Natural killer cell (primary cell): ENCODE measurements at regions of chrX and their contacts with region 1.

Region 1: DNA sequence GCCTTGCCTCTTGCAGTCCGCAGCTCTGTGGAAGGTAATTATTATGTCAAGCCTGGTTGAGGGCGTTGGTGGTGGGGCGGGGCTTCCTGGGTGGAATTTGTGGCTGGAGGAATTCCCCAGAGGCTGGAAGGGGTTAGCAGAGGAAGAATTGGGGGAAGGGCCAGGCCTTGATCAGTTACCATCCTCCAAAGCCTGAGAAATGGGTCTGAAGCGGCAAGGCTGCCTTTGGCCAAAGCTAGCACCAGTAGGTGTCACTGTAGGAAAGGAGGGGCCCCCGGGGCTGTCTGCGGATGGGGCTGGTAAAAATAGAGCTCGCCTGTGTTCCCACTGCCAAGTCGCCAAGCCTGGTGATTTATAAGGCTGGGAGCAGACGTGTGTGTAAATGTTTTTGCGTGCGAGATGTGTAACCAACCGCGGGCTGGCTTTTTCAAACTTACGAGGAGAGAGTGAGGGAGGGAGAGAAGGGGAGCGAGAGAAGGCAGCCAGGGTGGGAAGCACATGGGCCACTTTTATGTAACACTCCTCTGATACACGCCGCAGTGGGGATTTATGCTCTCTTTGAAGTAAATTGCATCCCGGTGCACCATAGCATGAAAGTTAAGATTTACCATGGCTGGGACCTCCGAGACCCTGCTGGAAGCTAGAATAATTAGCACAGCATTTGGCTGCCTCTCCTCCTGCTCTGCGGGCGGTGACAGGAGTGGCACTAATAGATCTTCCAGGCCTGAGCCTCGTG is 366.9 kb downstream of the BCOR start:
- DNase-seq: peak; percentile 26 to 70
- ATAC-seq: peak; percentile 52 to 81 (median 65)
- H3K4me3 ChIP-seq: no peak overlapping the region
- H3K4me3 Mint-ChIP-seq: no peak overlapping the region
- H3K27ac ChIP-seq: no peak overlapping the region
- H3K27ac Mint-ChIP-seq: no peak overlapping the region
- H3K4me1 ChIP-seq: peaks cover 12% of the 10 kb centered on the region
- H3K4me1 Mint-ChIP-seq: peaks cover 0 to 8% of the 10 kb centered on the region in 2 donors
- H3K27me3 ChIP-seq: no peaks in the 10 kb centered on the region
- H3K27me3 Mint-ChIP-seq: peaks cover 5 to 23% of the 10 kb centered on the region in 2 donors
- CTCF ChIP-seq: no peak

Region 2: GRCh38 chrX:39836802-39837420 is 106.1 kb after region 1 on chrX:
- intact Hi-C with region 1: no loop called
- DNase-seq: no peak
- ATAC-seq: peak in 1 of 3 donors; percentile 38
- H3K4me3 ChIP-seq: no peak overlapping the region
- H3K4me3 Mint-ChIP-seq: no peak overlapping the region
- H3K27ac ChIP-seq: no peak overlapping the region
- H3K27ac Mint-ChIP-seq: no peak overlapping the region
- H3K4me1 ChIP-seq: no peaks in the 10 kb centered on the region
- H3K4me1 Mint-ChIP-seq: no peaks in the 10 kb centered on the region
- H3K27me3 ChIP-seq: no peaks in the 10 kb centered on the region
- H3K27me3 Mint-ChIP-seq: no peaks in the 10 kb centered on the region
- CTCF ChIP-seq: no peak

Region 3: GRCh38 chrX:40266490-40267333 is 535.9 kb after region 1 on chrX:
- intact Hi-C with region 1: loop called (anchors 5 kb)
- DNase-seq: peak; percentile 26 to 74
- ATAC-seq: peak; percentile 66 to 84 (median 83)
- H3K4me3 ChIP-seq: peak overlapping the region; percentile 52
- H3K4me3 Mint-ChIP-seq: peak overlapping the region; percentile 72
- H3K27ac ChIP-seq: no peak overlapping the region
- H3K27ac Mint-ChIP-seq: no peak overlapping the region
- H3K4me1 ChIP-seq: peaks cover 18% of the 10 kb centered on the region
- H3K4me1 Mint-ChIP-seq: peaks cover 0 to 10% of the 10 kb centered on the region in 2 donors
- H3K27me3 ChIP-seq: no peaks in the 10 kb centered on the region
- H3K27me3 Mint-ChIP-seq: no peaks in the 10 kb centered on the region
- CTCF ChIP-seq: peak; percentile 52